Activated naive CD8-positive, alpha-beta T cell treated with anti-CD3 and anti-CD28 coated beads, Interleukin-2, amount 10 ng/mL, durations not matched to agents 7 days and 5 days (primary cell): ENCODE measurements at regions of chr5 and their contacts with region 1.

Region 1: GRCh38 chr5:179023528-179024430 is at the start of gene ZNF879:
- DNase-seq: peak; percentile 94
- ATAC-seq: peak; percentile 96
- H3K4me3 Mint-ChIP-seq: peak within 1 kb of the TSS; percentile 98
- H3K27ac Mint-ChIP-seq: peak within 1 kb of the TSS; percentile 89
- H3K4me1 Mint-ChIP-seq: peaks cover 2% of the 10 kb centered on the region
- H3K27me3 Mint-ChIP-seq: peaks cover 6% of the 10 kb centered on the region
- total RNA-seq, gene ZNF879: 7.5 to 8.1 TPM

Region 2: DNA sequence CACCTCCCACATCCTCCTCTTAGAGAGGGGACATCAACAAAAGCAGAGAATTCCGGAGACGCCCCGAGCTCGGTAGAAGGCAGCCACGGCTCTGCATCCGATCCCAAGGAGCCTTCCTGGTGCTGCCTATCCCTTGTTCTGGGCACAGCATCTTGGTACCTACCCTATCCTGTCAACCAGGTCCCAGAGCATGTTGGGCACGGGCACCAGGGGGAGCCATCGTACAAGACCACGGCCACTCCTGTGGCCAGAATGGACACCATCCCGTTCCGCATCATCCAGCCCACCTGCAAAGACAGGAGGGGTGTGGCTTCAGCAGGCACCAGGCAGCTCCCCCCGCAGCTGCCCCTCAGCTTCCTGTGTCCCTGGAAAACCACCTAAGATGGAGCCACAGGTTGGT is 230.6 kb before region 1 on chr5:
- POLR2A ChIA-PET with region 1: no interaction called
- DNase-seq: no peak
- ATAC-seq: no peak
- H3K4me3 Mint-ChIP-seq: no peak overlapping the region
- H3K27ac Mint-ChIP-seq: no peak overlapping the region
- H3K4me1 Mint-ChIP-seq: peaks cover 1% of the 10 kb centered on the region
- H3K27me3 Mint-ChIP-seq: no peaks in the 10 kb centered on the region

Region 3: DNA sequence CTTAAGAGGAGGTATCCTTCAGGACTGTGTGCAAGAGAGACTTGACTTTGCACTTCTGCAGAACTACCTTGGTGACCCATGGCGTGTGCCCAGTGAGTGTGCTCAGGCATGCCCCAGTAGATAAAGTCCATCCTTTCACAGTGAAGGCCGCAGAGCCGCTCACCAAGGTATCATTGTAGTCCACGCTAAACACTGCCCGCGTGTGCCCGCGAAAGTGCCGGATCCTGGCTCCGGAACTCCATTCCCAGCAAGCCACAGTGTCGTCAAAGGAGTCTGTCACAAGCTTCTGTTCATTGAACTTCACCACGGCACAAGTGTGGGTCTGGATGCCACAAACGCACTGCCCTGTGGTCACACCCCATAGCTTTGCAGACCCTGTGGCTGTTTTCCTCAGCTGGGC is 25.3 kb before region 1 on chr5:
- POLR2A ChIA-PET with region 1: no interaction called
- DNase-seq: no peak
- ATAC-seq: no peak
- H3K4me3 Mint-ChIP-seq: no peak overlapping the region
- H3K27ac Mint-ChIP-seq: no peak overlapping the region
- H3K4me1 Mint-ChIP-seq: peaks cover 4% of the 10 kb centered on the region
- H3K27me3 Mint-ChIP-seq: peaks cover 21% of the 10 kb centered on the region

Region 4: GRCh38 chr5:179060116-179061008 is 36.6 kb after region 1 on chr5 and contains the start of gene ZNF354C:
- POLR2A ChIA-PET with region 1: interaction called, 15 read pairs
- DNase-seq: peak; percentile 89
- ATAC-seq: peak; percentile 97
- H3K4me3 Mint-ChIP-seq: peak within 1 kb of the TSS; percentile 86
- H3K27ac Mint-ChIP-seq: peak within 1 kb of the TSS; percentile 87
- H3K4me1 Mint-ChIP-seq: peaks cover 16% of the 10 kb centered on the region
- H3K27me3 Mint-ChIP-seq: no peaks in the 10 kb centered on the region
- total RNA-seq, gene ZNF354C: 9.0 to 9.4 TPM